ENCODE measurements at regions of chr18 and their contacts with region 1.

Region 1: GRCh38 chr18:30280880-30281470 is 761.6 kb downstream of the DSC3 start:
- DNase-seq: peak; percentile 89
- ATAC-seq: peak; percentile 29
- H3K4me3 ChIP-seq: no peak overlapping the region
- H3K27ac ChIP-seq: no peak overlapping the region
- H3K4me1 ChIP-seq: no peaks in the 10 kb centered on the region
- H3K27me3 ChIP-seq: no peaks in the 10 kb centered on the region
- CTCF ChIP-seq: peak; percentile 81

Region 2: DNA sequence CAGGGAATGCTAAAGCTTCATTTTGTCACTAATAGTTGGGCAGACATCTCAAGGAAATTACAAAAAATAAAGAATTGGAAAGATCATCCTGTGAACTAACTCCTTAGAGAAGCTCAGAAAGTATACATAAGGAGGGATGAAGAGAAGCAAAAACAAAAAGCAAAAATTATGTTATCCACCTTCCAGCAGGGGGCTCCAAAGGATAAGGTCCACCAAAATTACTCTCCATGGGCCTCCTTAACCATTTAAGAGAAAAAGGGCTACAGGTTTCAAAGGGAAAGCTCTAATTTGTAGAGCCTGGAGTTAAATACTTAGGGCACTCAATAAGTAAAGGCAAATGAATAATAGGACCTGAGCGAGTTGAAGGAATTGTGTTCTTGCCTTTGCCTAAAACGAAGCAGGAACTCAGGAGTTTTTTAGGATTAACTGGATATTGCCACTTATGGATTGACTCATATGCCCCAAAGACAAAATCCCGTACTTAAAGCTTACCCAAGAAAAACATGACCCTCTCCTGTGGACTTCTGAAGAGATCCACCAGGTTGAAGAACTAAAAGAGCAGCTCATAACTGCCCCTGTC is 406.4 kb before region 1 on chr18:
- CTCF ChIA-PET with region 1: interaction called, 9 read pairs
- POLR2A ChIA-PET with region 1: no interaction called
- intact Hi-C with region 1: loop called (anchors 2 kb)
- DNase-seq: peak; percentile 63
- ATAC-seq: peak; percentile 64; the same call in 1 of the 2 replicates
- H3K4me3 ChIP-seq: no peak overlapping the region
- H3K27ac ChIP-seq: no peak overlapping the region
- H3K4me1 ChIP-seq: peaks cover 6% of the 10 kb centered on the region; the same call in 1 of the 2 replicates
- H3K27me3 ChIP-seq: no peaks in the 10 kb centered on the region
- CTCF ChIP-seq: peak; percentile 83

Region 3: DNA sequence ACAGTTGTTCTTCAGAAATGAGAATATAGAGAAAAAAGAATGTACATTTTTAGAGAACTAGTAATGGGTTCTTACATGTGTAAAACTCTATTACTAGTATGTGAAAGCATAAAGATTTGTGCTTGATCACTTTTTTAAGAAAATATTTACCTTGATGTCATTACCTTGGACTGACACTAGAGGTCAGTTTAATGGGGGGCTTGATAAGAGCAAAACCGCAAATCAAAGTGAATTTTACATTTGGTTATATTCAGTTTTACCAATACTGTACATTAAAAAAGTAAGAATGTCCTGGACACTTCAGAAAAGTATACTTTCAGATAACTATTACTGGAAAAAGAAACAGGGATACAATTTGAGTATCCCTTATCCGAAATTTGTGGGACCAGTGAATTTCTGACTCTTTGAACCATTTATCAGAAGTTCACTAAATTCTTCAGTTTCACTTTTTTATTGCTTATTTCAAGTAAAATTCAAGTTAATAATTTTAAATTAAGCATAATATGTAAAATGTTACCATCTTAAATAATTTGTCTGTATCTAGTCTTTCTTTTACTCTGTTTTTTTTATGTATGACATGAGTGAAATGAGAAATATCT is 387.9 kb before region 1 on chr18:
- CTCF ChIA-PET with region 1: no interaction called
- POLR2A ChIA-PET with region 1: no interaction called
- intact Hi-C with region 1: loop called (anchors 5 kb)
- DNase-seq: peak; percentile 48
- ATAC-seq: no peak
- H3K4me3 ChIP-seq: no peak overlapping the region
- H3K27ac ChIP-seq: no peak overlapping the region
- H3K4me1 ChIP-seq: no peaks in the 10 kb centered on the region
- H3K27me3 ChIP-seq: no peaks in the 10 kb centered on the region
- CTCF ChIP-seq: peak; percentile 79